Activated naive CD4-positive, alpha-beta T cell treated with anti-CD3 and anti-CD28 coated beads for 36 hours (primary cell): ENCODE measurements at regions of chr10 and their contacts with region 1.

Region 1: GRCh38 chr10:88865281-88865876 is 13.7 kb upstream of the ANKRD22 start:
- DNase-seq: no peak
- H3K4me3 Mint-ChIP-seq: no peak overlapping the region
- H3K27ac Mint-ChIP-seq: no peak overlapping the region
- H3K4me1 Mint-ChIP-seq: no peaks in the 10 kb centered on the region
- H3K27me3 Mint-ChIP-seq: peaks cover 15% of the 10 kb centered on the region

Region 2: GRCh38 chr10:88687853-88688467 is 177.4 kb before region 1 on chr10:
- CTCF ChIA-PET with region 1: no interaction called
- intact Hi-C with region 1: loop called (anchors 1 kb)
- DNase-seq: no peak
- H3K4me3 Mint-ChIP-seq: no peak overlapping the region
- H3K27ac Mint-ChIP-seq: no peak overlapping the region
- H3K4me1 Mint-ChIP-seq: no peaks in the 10 kb centered on the region
- H3K27me3 Mint-ChIP-seq: peaks cover 8% of the 10 kb centered on the region

Region 3: GRCh38 chr10:88728107-88728763 is 137.1 kb before region 1 on chr10:
- CTCF ChIA-PET with region 1: no interaction called
- intact Hi-C with region 1: loop called (anchors 1 kb)
- DNase-seq: peak; percentile 68
- H3K4me3 Mint-ChIP-seq: no peak overlapping the region
- H3K27ac Mint-ChIP-seq: no peak overlapping the region
- H3K4me1 Mint-ChIP-seq: peaks cover 2% of the 10 kb centered on the region
- H3K27me3 Mint-ChIP-seq: peaks cover 7% of the 10 kb centered on the region